T-cell (primary cell): ENCODE measurements at regions of chr1 and their contacts with region 1.

Region 1: DNA sequence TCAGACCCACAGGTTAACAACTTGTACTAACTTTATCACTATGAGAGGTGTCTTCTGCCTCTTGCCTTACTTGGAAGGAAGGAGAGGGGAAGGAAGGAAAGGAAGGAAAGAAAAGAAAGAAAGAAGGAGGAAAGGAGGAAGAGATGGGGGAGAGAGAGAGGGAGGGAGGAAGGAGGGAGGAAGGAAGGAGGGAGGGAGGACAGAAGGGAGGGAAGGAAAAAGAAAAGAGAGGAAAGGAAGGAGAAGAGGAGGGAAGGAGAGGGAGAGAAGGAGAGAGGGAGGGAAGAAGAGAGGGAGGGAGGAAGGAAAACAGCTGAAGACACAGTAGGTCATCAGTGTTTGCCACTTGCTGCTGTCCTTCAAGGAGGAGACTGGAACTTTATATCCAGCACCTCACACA is 5.3 kb upstream of the SIPA1L2 start:
- DNase-seq: no peak
- ATAC-seq: no peak
- H3K4me3 ChIP-seq: no peak overlapping the region
- H3K4me3 Mint-ChIP-seq: no peak overlapping the region
- H3K27ac ChIP-seq: no peak overlapping the region
- H3K27ac Mint-ChIP-seq: no peak overlapping the region
- H3K4me1 ChIP-seq: peaks cover 4 to 9% of the 10 kb centered on the region in 2 experiments
- H3K4me1 Mint-ChIP-seq: peaks cover 4 to 8% (median 7%) of the 10 kb centered on the region in 3 donors
- H3K27me3 ChIP-seq: peaks cover 0 to 14% of the 10 kb centered on the region in 2 experiments
- H3K27me3 Mint-ChIP-seq: peaks cover 18 to 23% of the 10 kb centered on the region in 2 donors

Region 2: GRCh38 chr1:232611834-232612233 is 23.4 kb before region 1 on chr1:
- CTCF ChIA-PET with region 1: no interaction called
- POLR2A ChIA-PET with region 1: no interaction called
- DNase-seq: no peak
- ATAC-seq: no peak
- H3K4me3 ChIP-seq: no peak overlapping the region
- H3K4me3 Mint-ChIP-seq: no peak overlapping the region
- H3K27ac ChIP-seq: no peak overlapping the region
- H3K27ac Mint-ChIP-seq: no peak overlapping the region
- H3K4me1 ChIP-seq: peaks cover 0 to 4% of the 10 kb centered on the region in 2 experiments
- H3K4me1 Mint-ChIP-seq: peaks cover 6 to 15% (median 12%) of the 10 kb centered on the region in 3 donors
- H3K27me3 ChIP-seq: no peaks in the 10 kb centered on the region
- H3K27me3 Mint-ChIP-seq: no peaks in the 10 kb centered on the region

Region 3: DNA sequence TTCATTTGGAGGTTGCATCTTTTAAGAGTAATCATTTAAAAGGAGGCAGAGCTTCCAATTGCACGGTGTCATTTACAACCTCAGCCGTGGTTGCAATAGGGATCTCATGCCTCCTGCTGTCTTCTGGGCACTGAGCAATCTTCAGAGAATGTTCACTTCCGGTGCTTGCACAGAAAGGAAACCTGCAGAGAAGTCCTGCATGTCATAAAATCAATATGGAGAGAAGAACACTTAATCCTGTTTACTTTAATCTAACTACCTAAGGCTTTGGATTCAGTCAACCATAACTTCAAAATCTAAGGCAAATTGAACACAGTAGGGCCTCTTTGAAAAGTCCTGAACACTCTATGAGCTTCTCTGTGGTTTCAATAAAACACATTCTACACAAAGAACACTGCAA is 158.7 kb after region 1 on chr1:
- CTCF ChIA-PET with region 1: interaction called in 1 of 2 experiments, 18 read pairs
- POLR2A ChIA-PET with region 1: no interaction called
- DNase-seq: peak in 7 of 35 experiments; percentile 3 to 50 (median 13)
- ATAC-seq: peak; percentile 70 to 83 (median 78)
- H3K4me3 ChIP-seq: no peak overlapping the region
- H3K4me3 Mint-ChIP-seq: no peak overlapping the region
- H3K27ac ChIP-seq: no peak overlapping the region
- H3K27ac Mint-ChIP-seq: peak overlapping the region; percentile 1 to 19
- H3K4me1 ChIP-seq: peaks cover 6 to 11% of the 10 kb centered on the region in 2 experiments
- H3K4me1 Mint-ChIP-seq: peaks cover 13 to 19% (median 14%) of the 10 kb centered on the region in 3 donors
- H3K27me3 ChIP-seq: peaks cover 0 to 2% of the 10 kb centered on the region in 2 experiments
- H3K27me3 Mint-ChIP-seq: peaks cover 0 to 3% of the 10 kb centered on the region in 2 donors

Region 4: DNA sequence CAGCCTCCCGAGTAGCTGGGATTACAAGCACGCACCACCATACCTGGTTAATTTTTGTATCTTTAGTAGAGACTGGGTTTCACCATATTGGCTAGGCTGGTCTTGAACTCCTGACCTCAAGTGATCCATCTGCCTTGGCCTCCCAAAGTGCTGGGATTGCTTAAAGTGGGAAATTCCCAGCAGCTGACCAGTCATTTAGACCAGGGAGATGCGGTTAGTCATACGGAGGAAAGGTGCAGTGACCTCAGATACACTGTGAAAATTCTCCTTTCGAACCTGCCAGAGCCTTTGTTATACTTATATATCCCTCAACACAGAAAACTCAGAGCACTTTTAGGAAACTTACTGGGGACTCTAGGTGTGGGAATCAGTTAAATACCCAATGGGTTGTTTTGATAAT is 209.5 kb after region 1 on chr1:
- CTCF ChIA-PET with region 1: no interaction called
- POLR2A ChIA-PET with region 1: no interaction called
- DNase-seq: no peak
- ATAC-seq: no peak
- H3K4me3 ChIP-seq: no peak overlapping the region
- H3K4me3 Mint-ChIP-seq: no peak overlapping the region
- H3K27ac ChIP-seq: no peak overlapping the region
- H3K27ac Mint-ChIP-seq: no peak overlapping the region
- H3K4me1 ChIP-seq: no peaks in the 10 kb centered on the region
- H3K4me1 Mint-ChIP-seq: no peaks in the 10 kb centered on the region
- H3K27me3 ChIP-seq: no peaks in the 10 kb centered on the region
- H3K27me3 Mint-ChIP-seq: peaks cover 0 to 8% of the 10 kb centered on the region in 2 donors